Activated CD8-positive, alpha-beta T cell treated with anti-CD3 and anti-CD28 coated beads, Interleukin-2, amount 10 ng/mL, durations not matched to agents 7 days and 5 days (primary cell): ENCODE measurements at regions of chr7 and their contacts with region 1.

Region 1: DNA sequence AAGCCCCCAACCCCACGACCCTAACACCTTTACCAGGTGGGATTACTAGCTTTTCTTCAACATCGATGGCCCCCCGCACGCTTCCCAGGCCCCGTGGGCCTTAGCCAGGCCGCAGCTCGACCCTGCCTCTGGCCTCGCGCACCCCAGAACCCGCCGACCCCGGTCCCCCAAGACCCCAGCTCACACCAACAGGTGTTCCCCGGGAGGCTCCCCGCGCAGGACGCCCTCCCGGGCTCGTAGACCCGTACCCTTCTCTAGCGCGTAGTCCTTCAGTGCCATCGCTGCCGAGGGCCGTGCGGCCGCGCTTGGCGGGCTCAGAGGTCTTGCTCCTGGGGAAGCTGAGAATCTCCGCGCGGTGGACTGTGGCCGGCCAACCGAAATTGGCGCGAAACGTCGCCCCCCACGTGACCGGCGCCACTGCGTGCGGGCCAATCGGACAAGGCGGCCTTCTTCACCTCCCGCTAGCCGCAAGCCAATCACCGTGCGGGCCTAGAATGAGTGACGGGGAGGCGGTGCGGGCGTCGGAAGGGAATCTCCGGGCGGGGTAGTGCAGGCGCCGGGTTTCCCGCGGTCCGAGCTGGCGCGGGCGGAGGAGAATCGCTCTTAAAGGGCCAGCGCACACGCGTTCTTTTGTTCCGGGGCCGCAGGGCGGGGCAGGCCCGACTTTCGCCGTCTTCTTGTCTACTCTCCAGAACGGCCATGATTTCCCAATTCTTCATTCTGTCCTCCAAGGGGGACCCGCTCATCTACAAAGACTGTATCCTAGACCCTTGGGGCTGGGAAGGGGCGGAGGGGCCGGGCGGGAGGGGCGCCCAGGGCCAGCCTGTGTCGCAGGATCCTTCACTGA is at the starts of genes AP4M1 and MCM7:
- DNase-seq: peak; percentile 99
- ATAC-seq: peak; percentile 86
- H3K4me3 Mint-ChIP-seq: peak within 1 kb of the TSS; percentile 89
- H3K27ac Mint-ChIP-seq: peak within 1 kb of the TSS; percentile 92
- H3K4me1 Mint-ChIP-seq: peaks cover 40% of the 10 kb centered on the region
- H3K27me3 Mint-ChIP-seq: no peaks in the 10 kb centered on the region
- total RNA-seq, gene AP4M1: 10.8 to 13.0 TPM
- total RNA-seq, gene MCM7: 364 to 375 TPM

Region 2: GRCh38 chr7:99794585-99795502 is 306.4 kb before region 1 on chr7:
- CTCF ChIA-PET with region 1: no interaction called
- POLR2A ChIA-PET with region 1: no interaction called
- DNase-seq: no peak
- ATAC-seq: no peak
- H3K4me3 Mint-ChIP-seq: no peak overlapping the region
- H3K27ac Mint-ChIP-seq: no peak overlapping the region
- H3K4me1 Mint-ChIP-seq: no peaks in the 10 kb centered on the region
- H3K27me3 Mint-ChIP-seq: peaks cover 7% of the 10 kb centered on the region

Region 3: DNA sequence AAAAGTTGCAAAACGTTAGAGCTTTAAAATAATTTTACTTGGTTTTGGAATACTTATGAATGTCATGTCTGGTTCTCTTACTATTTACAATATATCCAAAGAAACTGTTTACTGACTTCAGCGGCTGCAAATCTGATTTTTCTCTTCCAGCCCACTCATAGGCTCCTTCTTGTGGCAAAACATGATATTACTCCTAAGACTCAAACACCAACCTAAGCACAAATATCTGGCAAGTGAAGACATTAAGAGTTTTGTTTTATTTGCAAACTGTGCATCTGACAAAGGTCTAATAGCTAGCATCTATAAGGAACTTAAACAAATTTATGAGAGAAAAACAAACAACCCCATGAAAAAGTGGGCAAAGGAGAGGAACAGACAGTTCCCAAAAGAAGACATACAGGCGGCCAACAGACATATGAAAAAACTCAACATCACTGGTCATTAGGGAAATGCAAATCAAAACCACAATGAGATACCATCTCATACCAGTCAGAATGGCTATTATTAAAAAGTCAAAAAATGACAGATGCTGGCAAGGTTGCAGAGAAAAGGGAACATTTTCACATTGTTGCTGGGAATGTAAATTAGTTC is 151.5 kb before region 1 on chr7:
- CTCF ChIA-PET with region 1: no interaction called
- POLR2A ChIA-PET with region 1: no interaction called
- DNase-seq: no peak
- ATAC-seq: no peak
- H3K4me3 Mint-ChIP-seq: no peak overlapping the region
- H3K27ac Mint-ChIP-seq: no peak overlapping the region
- H3K4me1 Mint-ChIP-seq: peaks cover 4% of the 10 kb centered on the region
- H3K27me3 Mint-ChIP-seq: peaks cover 4% of the 10 kb centered on the region

Region 4: DNA sequence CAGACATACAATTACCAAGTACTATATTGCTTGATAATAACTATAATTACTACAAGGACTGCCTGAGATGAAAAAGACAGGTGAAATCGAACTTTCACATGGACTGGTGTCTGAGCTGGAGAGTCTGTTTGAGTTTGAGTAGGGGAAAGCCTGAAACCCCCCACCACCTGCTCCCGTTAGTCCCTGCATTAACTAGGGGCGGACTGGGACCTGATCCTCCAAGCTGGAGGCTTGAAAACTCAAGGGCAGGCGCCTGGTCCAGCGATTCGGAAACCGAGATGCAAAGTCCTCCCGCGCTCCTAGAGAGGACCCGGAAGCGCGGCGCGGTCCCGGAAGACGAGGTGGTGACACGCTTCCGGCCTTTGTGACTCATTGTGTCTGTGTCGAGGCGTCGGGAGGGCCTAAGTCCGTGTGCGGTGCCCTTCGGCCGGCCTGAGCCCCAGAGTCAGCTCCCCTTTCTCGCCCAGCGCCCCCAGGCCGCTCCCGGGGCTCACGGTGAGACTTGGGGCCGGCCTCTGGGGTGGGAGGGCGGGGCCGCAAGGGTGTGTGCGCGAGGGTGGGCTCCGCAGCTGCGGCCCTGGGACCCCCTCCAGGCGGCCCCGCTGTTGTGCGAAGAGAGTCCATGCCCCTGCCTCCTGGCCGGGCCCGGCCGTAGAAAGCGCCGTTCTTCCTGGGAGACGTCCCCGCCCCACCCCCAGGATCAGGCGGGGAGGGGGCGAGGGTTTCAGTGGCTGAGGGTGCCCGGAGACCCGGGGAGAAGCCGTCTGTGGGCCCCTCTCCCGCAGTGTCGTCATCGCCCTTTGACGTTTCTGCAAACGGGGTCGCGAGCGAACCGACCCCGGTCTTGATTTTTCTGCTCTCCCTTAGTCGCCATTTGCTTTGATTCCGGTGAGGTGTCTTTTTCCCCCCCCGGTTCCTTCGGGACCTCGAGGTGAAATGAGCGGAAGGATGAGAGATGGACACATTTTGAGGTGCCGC is 85.7 kb before region 1 on chr7 and contains the start of gene ZKSCAN1:
- CTCF ChIA-PET with region 1: no interaction called
- POLR2A ChIA-PET with region 1: no interaction called
- DNase-seq: peak; percentile 90
- ATAC-seq: peak; percentile 98
- H3K4me3 Mint-ChIP-seq: peak within 1 kb of the TSS; percentile 92
- H3K27ac Mint-ChIP-seq: peak within 1 kb of the TSS; percentile 95
- H3K4me1 Mint-ChIP-seq: peaks cover 50% of the 10 kb centered on the region
- H3K27me3 Mint-ChIP-seq: no peaks in the 10 kb centered on the region
- total RNA-seq, gene ZKSCAN1: 50.4 to 54.5 TPM

Region 5: DNA sequence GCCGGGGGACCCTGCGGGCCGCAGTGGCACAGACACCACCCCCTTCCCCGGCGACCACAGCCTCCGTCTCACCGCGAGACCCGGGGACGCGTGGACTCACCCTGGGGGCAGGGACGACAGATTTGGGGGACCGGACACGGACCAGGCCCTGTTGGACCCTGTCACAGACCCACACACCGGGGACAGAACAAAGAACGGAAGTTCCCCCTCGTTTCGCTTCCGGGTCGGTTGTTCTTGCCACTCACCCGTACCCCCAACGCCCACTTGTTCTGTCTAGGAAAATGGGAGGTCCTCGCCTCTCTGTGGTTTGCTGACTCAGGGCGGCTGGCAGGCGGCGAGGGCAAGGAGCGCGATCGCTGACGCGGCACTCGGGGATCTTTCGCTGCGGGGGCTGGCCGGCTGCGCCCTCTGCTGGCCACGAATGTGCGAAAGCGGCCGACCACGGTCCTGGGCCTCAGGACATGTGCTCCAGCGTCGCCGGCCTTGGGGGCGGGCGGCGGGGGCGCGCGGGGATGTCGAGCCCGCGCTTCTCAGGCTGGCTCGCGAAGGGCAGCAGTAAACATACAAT is 19.6 kb before region 1 on chr7 and contains the start of gene ZNF3:
- CTCF ChIA-PET with region 1: interaction called, 3 read pairs
- POLR2A ChIA-PET with region 1: interaction called, 19 read pairs
- DNase-seq: peak; percentile 99
- ATAC-seq: peak; percentile 91
- H3K4me3 Mint-ChIP-seq: peak within 1 kb of the TSS; percentile 83
- H3K27ac Mint-ChIP-seq: peak within 1 kb of the TSS; percentile 90
- H3K4me1 Mint-ChIP-seq: peaks cover 25% of the 10 kb centered on the region
- H3K27me3 Mint-ChIP-seq: peaks cover 3% of the 10 kb centered on the region
- total RNA-seq, gene ZNF3: 20.9 to 21.8 TPM

Region 6: GRCh38 chr7:100088621-100089457 is 12.4 kb before region 1 on chr7 and contains the start of gene COPS6:
- CTCF ChIA-PET with region 1: interaction called, 4 read pairs
- POLR2A ChIA-PET with region 1: interaction called, 57 read pairs
- DNase-seq: peak; percentile 86
- ATAC-seq: peak; percentile 69
- H3K4me3 Mint-ChIP-seq: peak within 1 kb of the TSS; percentile 91
- H3K27ac Mint-ChIP-seq: peak within 1 kb of the TSS; percentile 93
- H3K4me1 Mint-ChIP-seq: peaks cover 42% of the 10 kb centered on the region
- H3K27me3 Mint-ChIP-seq: no peaks in the 10 kb centered on the region
- total RNA-seq, gene COPS6: 74.0 to 78.3 TPM

Region 7: GRCh38 chr7:100119062-100119700 is 17.9 kb after region 1 on chr7 and contains the starts of genes CNPY4 and TAF6:
- CTCF ChIA-PET with region 1: interaction called, 9 read pairs
- POLR2A ChIA-PET with region 1: interaction called, 52 read pairs
- DNase-seq: peak; percentile 96
- ATAC-seq: peak; percentile 77
- H3K4me3 Mint-ChIP-seq: peak within 1 kb of the TSS; percentile 93
- H3K27ac Mint-ChIP-seq: peak within 1 kb of the TSS; percentile 95
- H3K4me1 Mint-ChIP-seq: peaks cover 21% of the 10 kb centered on the region
- H3K27me3 Mint-ChIP-seq: no peaks in the 10 kb centered on the region
- total RNA-seq, gene CNPY4: 32.4 to 35.5 TPM
- total RNA-seq, gene TAF6: 74.6 to 81.0 TPM

Region 8: DNA sequence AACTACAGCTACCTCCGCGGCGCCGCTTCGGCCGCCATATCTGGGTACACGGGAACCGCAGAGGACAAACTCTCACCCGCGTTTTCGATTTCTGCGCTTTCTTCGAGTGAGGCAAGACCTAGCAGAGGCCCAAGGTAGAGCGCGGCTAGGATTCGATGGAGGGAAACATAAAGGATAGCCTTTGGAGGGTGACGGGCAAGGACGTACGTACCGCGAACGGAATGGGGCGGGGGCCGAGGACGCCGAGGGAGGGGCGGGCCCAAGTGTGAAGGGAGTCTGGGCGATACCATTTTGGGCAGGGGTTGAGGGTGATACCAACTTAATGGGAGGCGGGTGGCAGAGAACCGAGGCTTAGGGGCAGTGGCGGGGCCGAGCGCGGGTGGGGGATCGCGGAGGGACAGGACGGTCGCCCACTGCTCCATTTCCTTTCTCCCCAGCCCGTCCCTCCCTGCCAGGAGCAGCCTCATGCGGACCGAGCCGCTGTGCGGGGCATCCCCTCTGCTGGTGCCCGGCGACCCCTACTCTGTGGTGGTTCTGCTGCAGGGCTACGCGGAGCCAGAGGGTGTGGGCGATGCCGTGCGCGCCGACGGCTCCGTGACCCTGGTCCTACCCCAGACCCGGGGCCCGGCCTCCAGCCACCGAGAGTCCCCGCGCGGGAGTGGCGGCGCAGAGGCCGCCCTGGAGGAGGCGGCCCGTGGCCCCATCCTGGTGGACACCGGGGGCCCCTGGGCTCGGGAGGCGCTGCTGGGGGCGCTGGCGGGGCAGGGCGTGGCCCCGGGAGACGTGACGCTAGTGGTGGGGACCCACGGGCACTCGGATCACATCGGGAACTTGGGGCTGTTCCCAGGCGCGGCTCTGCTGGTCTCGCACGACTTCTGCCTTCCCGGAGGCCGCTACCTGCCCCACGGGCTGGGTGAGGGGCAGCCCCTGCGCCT is 26.0 kb after region 1 on chr7 and contains the start of gene MBLAC1:
- CTCF ChIA-PET with region 1: interaction called, 24 read pairs
- POLR2A ChIA-PET with region 1: interaction called, 52 read pairs
- DNase-seq: peak; percentile 95
- ATAC-seq: peak; percentile 72
- H3K4me3 Mint-ChIP-seq: peak within 1 kb of the TSS; percentile 98
- H3K27ac Mint-ChIP-seq: peak within 1 kb of the TSS; percentile 100
- H3K4me1 Mint-ChIP-seq: peaks cover 49% of the 10 kb centered on the region
- H3K27me3 Mint-ChIP-seq: no peaks in the 10 kb centered on the region
- total RNA-seq, gene MBLAC1: 4.3 to 5.7 TPM

Region 9: DNA sequence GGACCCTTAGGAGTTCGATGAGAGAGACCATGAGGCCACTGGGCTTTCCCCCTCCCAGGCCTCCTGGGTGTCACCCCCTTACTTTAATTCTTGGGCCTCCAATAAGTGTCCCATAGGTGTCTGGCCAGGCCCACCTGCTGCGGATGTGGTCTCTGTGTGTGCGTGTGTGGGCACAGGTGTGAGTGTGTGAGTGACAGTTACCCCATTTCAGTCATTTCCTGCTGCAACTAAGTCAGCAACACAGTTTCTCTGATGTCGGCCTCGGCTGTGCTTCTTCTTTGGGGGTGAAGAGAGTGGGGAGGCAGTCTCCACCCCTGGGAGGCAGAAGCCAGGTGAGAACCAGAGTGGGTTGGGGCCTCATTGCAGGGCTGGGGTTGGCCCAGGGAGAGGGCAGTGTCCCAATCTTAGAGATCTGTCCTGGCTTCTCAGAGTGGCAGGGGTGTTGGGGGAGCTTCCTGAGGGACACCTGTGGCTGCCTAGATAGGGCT is 120.0 kb after region 1 on chr7:
- CTCF ChIA-PET with region 1: interaction called, 4 read pairs
- POLR2A ChIA-PET with region 1: interaction called, 14 read pairs
- DNase-seq: peak; percentile 83
- ATAC-seq: peak; percentile 50
- H3K4me3 Mint-ChIP-seq: peak overlapping the region; percentile 95
- H3K27ac Mint-ChIP-seq: peak overlapping the region; percentile 98
- H3K4me1 Mint-ChIP-seq: peaks cover 65% of the 10 kb centered on the region
- H3K27me3 Mint-ChIP-seq: no peaks in the 10 kb centered on the region